HCT116 (cell line): ENCODE measurements at regions of chr16 and their contacts with region 1.

Region 1: GRCh38 chr16:29700253-29700987 is 21.4 kb downstream of the QPRT start:
- DNase-seq: peak; percentile 84
- ATAC-seq: peak; percentile 97
- H3K4me3 ChIP-seq: peak overlapping the region in 1 of 2 experiments; percentile 16; a peak in 1 of 4 replicates
- H3K27ac ChIP-seq: no peak overlapping the region
- H3K4me1 ChIP-seq: peaks cover 2 to 17% of the 10 kb centered on the region in 2 experiments; a peak in 3 of 4 replicates
- H3K27me3 ChIP-seq: no peaks in the 10 kb centered on the region
- CTCF ChIP-seq: peak; percentile 85 to 90 (median 86)
- POLR2A ChIP-seq: no peak
- RAD21 ChIP-seq: peak; percentile 96

Region 2: GRCh38 chr16:29710227-29711219 is 10.1 kb after region 1 on chr16:
- CTCF ChIA-PET with region 1: interaction called, 13 read pairs
- POLR2A ChIA-PET with region 1: no interaction called
- RAD21 ChIA-PET with region 1: no interaction called
- intact Hi-C with region 1: no loop called
- DNase-seq: peak; percentile 56
- ATAC-seq: peak; percentile 96
- H3K4me3 ChIP-seq: no peak overlapping the region
- H3K27ac ChIP-seq: no peak overlapping the region
- H3K4me1 ChIP-seq: peaks cover 5 to 11% of the 10 kb centered on the region in 2 experiments; a peak in 3 of 4 replicates
- H3K27me3 ChIP-seq: no peaks in the 10 kb centered on the region
- CTCF ChIP-seq: peak; percentile 49 to 68 (median 51); a peak in 5 of 6 replicates
- POLR2A ChIP-seq: no peak
- RAD21 ChIP-seq: peak; percentile 38; the same call in 1 of the 2 replicates

Region 3: DNA sequence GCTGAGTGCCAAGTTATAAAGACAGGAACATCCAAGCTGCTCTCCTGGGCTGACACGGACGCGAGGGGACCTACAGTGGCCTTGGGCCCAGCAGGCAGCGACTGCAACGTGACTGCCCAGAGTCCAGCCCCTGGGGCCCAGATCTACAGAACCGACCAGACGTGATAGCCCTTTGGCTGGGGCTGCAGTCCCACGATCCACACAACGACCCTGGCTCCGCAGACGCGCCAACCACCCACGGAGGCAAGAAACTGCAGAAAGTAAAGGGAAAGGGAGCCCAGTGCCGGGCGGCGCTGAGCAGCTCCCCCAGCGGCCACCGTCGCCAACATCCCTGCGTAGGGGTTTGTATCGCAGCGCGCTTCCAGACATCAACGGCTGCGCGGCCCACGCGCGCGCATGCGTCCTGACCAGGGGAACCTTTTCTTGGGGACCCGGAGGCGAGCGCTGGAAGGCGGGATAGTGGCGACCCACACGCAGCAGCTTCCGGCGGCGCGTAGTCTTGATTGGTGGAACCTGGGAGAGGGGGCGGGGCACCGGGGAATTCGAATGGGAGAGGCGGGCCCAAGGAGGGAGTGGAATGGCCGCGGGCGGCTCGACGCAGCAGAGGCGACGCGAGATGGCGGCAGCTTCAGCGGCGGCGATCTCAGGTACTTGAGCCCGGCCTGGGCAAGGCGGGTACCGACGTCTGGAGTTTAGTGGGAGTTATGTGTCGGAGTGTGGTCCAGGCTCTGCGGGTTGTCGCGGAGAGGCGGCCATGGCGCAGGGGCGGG is 89.9 kb after region 1 on chr16 and contains the start of gene KIF22:
- CTCF ChIA-PET with region 1: interaction called, 12 read pairs
- POLR2A ChIA-PET with region 1: no interaction called
- RAD21 ChIA-PET with region 1: interaction called in 1 of 2 experiments, 3 read pairs
- intact Hi-C with region 1: no loop called
- DNase-seq: peak; percentile 96
- ATAC-seq: peak; percentile 95
- H3K4me3 ChIP-seq: peak within 1 kb of the TSS; percentile 90 to 99
- H3K27ac ChIP-seq: peak within 1 kb of the TSS; percentile 80
- H3K4me1 ChIP-seq: peaks cover 13 to 21% of the 10 kb centered on the region in 2 experiments
- H3K27me3 ChIP-seq: no peaks in the 10 kb centered on the region
- CTCF ChIP-seq: peak; percentile 13 to 66 (median 62); a peak in 5 of 6 replicates
- POLR2A ChIP-seq: peak; percentile 77
- RAD21 ChIP-seq: 0 out of 2 replicates have a peak, but pooled peaks have one; percentile 14
- total RNA-seq, gene KIF22: 155 TPM

Region 4: GRCh38 chr16:29815793-29816693 is 115.6 kb after region 1 on chr16 and contains the start of gene PAGR1:
- CTCF ChIA-PET with region 1: interaction called, 13 read pairs
- POLR2A ChIA-PET with region 1: interaction called, 4 read pairs
- RAD21 ChIA-PET with region 1: interaction called in 1 of 2 experiments, 3 read pairs
- intact Hi-C with region 1: loop called (anchors 2 kb)
- DNase-seq: peak; percentile 99
- ATAC-seq: peak; percentile 69
- H3K4me3 ChIP-seq: peak within 1 kb of the TSS; percentile 87 to 98
- H3K27ac ChIP-seq: peak within 1 kb of the TSS; percentile 98
- H3K4me1 ChIP-seq: peaks cover 32 to 78% of the 10 kb centered on the region in 2 experiments
- H3K27me3 ChIP-seq: no peaks in the 10 kb centered on the region
- CTCF ChIP-seq: peak in 2 of 3 experiments; percentile 83 to 90; a peak in 4 of 6 replicates
- POLR2A ChIP-seq: peak; percentile 85
- RAD21 ChIP-seq: no peak
- total RNA-seq, gene PAGR1: 28.9 TPM

Region 5: DNA sequence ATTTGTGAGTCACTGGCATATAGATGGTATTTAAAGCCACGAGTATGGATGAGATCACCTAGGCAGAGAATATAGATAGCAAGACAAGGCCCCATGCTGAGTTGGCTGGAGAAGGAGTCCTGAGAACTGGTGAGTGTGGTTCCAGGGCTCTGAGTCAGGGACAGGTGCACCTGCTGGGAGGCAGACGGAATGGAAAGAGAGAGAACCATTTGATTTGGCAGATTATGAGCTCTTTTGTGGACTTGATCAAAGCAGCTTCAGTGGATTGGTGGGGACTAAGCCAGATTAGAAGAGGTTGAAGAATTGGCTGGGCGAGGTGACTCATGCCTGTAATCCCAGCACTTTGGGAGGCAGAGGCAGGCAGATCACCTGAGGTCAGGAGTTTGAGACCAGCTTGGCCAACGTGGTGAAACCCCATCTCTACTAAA is 318.3 kb after region 1 on chr16:
- CTCF ChIA-PET with region 1: interaction called, 14 read pairs
- POLR2A ChIA-PET with region 1: interaction called, 5 read pairs
- RAD21 ChIA-PET with region 1: interaction called in 1 of 2 experiments, 3 read pairs
- intact Hi-C with region 1: loop called (anchors 1 kb)
- DNase-seq: no peak
- ATAC-seq: no peak
- H3K4me3 ChIP-seq: no peak overlapping the region
- H3K27ac ChIP-seq: no peak overlapping the region
- H3K4me1 ChIP-seq: peaks cover 0 to 18% of the 10 kb centered on the region in 2 experiments; a peak in 3 of 4 replicates
- H3K27me3 ChIP-seq: no peaks in the 10 kb centered on the region
- CTCF ChIP-seq: no peak
- POLR2A ChIP-seq: no peak
- RAD21 ChIP-seq: no peak

Region 6: DNA sequence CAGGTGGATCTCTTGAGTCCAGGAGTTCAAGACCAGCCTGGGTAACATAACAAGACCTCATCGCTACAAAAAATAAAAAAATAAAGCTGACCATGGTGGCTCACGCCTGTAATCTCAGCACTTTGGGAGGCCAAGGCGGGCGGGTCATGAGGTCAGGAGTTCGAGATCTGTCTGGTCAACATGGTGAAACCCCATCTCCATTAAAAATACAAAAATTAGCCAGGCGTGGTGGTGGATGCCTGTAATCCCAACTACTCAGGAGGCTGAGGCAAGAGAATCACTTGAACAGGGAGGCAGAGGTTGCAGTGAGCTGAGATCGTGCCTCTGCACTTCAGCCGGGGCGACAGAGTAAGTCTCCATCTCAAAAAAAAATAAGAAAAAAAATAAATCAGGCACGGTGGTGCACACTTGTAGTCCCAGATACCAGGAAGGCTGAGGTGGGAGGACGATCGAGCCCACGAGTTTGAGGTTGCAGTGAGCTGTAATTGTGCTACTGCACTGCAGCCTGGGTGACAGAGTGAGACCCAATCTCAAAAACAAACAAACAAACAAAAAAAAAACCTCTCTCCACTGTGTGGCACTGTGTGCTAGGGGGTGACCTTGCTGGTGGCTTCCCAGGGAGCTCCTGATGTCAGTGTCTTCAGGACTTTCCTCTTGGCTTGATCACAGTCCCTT is 442.4 kb after region 1 on chr16:
- CTCF ChIA-PET with region 1: no interaction called
- POLR2A ChIA-PET with region 1: no interaction called
- RAD21 ChIA-PET with region 1: no interaction called
- intact Hi-C with region 1: no loop called
- DNase-seq: no peak
- ATAC-seq: peak; percentile 81
- H3K4me3 ChIP-seq: no peak overlapping the region
- H3K27ac ChIP-seq: no peak overlapping the region
- H3K4me1 ChIP-seq: no peaks in the 10 kb centered on the region
- H3K27me3 ChIP-seq: no peaks in the 10 kb centered on the region
- CTCF ChIP-seq: peak; percentile 25 to 58 (median 48); a peak in 4 of 6 replicates
- POLR2A ChIP-seq: no peak
- RAD21 ChIP-seq: peak; percentile 81